Left ventricle myocardium inferior (tissue), 1 donor: ENCODE measurements at regions of chr1 and their contacts with region 1.

Region 1: DNA sequence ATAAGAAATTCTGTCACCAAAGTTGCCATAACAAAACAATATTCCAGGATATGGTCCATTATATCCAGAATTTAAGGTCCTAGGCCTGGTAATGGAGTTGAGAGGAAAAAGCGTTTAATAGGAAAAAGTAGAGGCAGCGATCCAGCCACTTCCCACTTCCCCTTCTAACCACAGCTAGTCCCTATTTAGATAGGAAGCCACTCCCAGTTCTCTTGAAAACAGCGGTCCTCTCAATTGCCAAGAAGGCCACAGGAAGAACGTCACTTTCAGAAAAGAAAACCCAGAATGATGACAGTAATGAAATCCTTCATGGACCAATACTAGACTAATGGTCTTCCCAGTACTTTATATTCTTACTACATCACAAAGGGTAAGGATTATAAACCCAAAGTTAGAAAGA is 38.6 kb downstream of the ABL2 start:
- DNase-seq: no peak
- H3K4me3 ChIP-seq: no peak overlapping the region
- H3K27ac ChIP-seq: peak overlapping the region; percentile 77
- H3K4me1 ChIP-seq: peaks cover 7% of the 10 kb centered on the region
- H3K27me3 ChIP-seq: no peaks in the 10 kb centered on the region
- CTCF ChIP-seq: no peak

Region 2: DNA sequence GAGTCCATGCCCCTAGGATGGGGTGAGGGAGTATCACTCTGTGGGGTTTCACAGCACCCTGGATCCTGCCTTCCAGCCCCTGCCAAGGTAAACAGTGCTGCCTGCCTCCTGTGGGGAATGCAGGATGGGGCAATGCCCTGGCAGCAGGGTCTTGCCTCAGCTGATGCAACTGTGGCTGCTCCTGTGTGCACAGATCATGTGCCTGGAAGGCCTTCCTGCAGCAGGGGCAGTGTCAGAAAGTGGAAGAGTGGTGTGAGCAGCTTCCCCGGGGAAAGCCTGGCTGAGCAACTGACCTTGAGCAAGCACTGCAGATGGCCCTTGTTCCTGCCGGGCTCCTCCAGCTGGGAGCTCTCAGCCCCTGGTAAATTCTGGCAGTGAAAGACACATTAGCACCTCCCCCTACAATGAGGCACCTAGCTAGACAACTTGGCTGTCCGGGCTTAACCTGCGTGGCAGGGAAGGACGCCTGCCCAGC is 99.1 kb before region 1 on chr1:
- intact Hi-C with region 1: loop called (anchors 10 kb)
- DNase-seq: peak; percentile 62
- H3K4me3 ChIP-seq: no peak overlapping the region
- H3K27ac ChIP-seq: peak overlapping the region; percentile 81
- H3K4me1 ChIP-seq: peaks cover 64% of the 10 kb centered on the region
- H3K27me3 ChIP-seq: no peaks in the 10 kb centered on the region
- CTCF ChIP-seq: no peak

Region 3: GRCh38 chr1:179121159-179121938 is 69.5 kb before region 1 on chr1:
- intact Hi-C with region 1: loop called (anchors 10 kb)
- DNase-seq: no peak
- H3K4me3 ChIP-seq: no peak overlapping the region
- H3K27ac ChIP-seq: no peak overlapping the region
- H3K4me1 ChIP-seq: peaks cover 8% of the 10 kb centered on the region
- H3K27me3 ChIP-seq: no peaks in the 10 kb centered on the region
- CTCF ChIP-seq: peak; percentile 67

Region 4: GRCh38 chr1:179337288-179337687 is 146.4 kb after region 1 on chr1:
- intact Hi-C with region 1: no loop called
- DNase-seq: no peak
- H3K4me3 ChIP-seq: no peak overlapping the region
- H3K27ac ChIP-seq: no peak overlapping the region
- H3K4me1 ChIP-seq: no peaks in the 10 kb centered on the region
- H3K27me3 ChIP-seq: no peaks in the 10 kb centered on the region
- CTCF ChIP-seq: no peak